ENCODE measurements at regions of chr4 and their contacts with region 1.

Region 1: DNA sequence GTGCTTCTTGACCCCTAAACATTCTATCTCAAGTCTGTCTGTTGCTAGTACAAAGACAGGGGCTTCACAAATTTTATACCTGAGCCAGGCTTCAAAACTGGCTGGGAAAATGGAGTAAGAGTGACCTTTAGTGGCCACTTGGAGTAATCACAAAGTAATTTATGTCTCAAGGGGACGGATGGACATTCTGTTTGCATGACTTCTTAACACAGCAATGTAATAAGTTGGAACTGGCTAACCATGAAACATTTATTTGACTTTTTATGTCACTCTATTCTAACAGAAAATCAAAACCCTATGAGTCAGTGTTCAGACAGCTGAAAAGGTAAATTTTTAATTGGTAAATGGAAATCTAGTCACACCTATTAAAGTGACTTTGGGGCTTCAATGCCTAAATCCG is 600.6 kb downstream of the ANKRD50 start:
- DNase-seq: peak in 2 of 4 donors; percentile 57 to 78
- ATAC-seq: peak; percentile 89
- H3K4me3 ChIP-seq: no peak overlapping the region
- H3K27ac ChIP-seq: peak overlapping the region in 1 of 2 donors; percentile 20
- H3K4me1 ChIP-seq: peaks cover 0 to 4% of the 10 kb centered on the region in 2 donors
- H3K27me3 ChIP-seq: no peaks in the 10 kb centered on the region
- CTCF ChIP-seq: peak; percentile 26 to 54

Region 2: GRCh38 chr4:123127218-123127617 is 984.7 kb before region 1 on chr4:
- intact Hi-C with region 1: loop called in 1 of 2 experiments (anchors 10 kb)
- DNase-seq: peak in 1 of 4 donors; percentile 44
- ATAC-seq: peak; percentile 59
- H3K4me3 ChIP-seq: no peak overlapping the region
- H3K27ac ChIP-seq: no peak overlapping the region
- H3K4me1 ChIP-seq: peaks cover 0 to 6% of the 10 kb centered on the region in 2 donors
- H3K27me3 ChIP-seq: no peaks in the 10 kb centered on the region
- CTCF ChIP-seq: peak; percentile 14 to 27

Region 3: DNA sequence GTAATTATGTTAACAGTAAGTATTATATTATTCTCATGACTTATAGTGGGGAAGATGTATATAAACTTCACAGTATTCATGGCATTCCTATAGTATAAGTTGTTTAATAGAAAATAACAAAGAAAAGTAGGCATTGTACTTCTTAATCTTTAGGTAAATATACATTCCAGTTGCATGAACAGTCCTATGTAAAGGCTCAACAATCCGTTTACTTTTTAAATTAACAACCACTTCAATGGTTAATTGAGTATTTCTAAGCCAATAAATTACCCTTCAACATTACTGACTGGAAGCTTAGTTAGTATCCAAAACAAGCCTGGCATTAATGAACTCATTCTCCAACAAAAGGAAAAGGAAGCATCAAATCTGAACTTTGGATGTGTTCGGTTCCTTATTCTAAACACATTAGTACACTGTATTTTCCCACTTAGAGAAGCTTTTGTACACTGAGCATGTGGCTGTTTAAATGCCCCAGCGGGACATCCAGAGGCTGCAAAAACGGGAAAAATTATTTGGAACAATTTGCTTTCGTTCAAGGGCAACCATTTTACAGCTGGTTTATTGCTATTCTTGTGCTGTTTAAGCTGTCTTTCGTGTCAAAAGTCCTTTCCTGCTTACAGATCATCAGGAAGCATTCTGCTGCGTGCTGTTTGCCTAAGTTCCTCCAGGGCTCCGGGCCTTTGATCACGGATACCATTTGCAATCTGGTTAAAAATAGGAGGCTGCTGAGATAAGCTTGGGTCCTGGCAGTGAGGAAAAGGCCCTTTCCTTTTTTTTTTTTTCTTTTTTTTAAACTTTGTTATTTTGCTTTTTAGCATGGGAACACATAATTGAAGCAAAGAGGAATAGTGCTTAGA is 255.0 kb before region 1 on chr4:
- intact Hi-C with region 1: no loop called
- DNase-seq: peak in 1 of 4 donors; percentile 61
- ATAC-seq: peak; percentile 57
- H3K4me3 ChIP-seq: no peak overlapping the region
- H3K27ac ChIP-seq: peak overlapping the region; percentile 45 to 47
- H3K4me1 ChIP-seq: peaks cover 0 to 11% of the 10 kb centered on the region in 2 donors
- H3K27me3 ChIP-seq: no peaks in the 10 kb centered on the region
- CTCF ChIP-seq: no peak

Region 4: DNA sequence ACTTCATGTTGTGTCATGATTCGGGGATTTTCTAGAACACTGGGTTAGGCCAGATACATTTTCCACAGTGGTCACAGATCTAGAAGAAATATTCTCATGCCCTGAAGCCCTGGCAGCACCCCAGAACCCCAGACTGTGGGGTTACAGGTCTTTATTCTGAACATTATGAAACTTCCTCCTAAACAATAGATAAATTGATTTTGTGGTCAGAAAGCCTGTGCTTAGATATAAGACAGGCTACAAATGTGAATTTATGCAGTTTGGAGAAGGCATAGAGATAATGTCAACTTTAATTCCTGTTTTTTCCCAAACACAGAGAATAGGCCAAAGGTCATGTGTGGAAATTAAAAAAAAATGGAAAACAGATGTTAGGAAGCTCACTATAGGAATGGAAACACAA is 222.4 kb before region 1 on chr4:
- intact Hi-C with region 1: no loop called
- DNase-seq: no peak
- ATAC-seq: no peak
- H3K4me3 ChIP-seq: no peak overlapping the region
- H3K27ac ChIP-seq: no peak overlapping the region
- H3K4me1 ChIP-seq: peaks cover 7 to 12% of the 10 kb centered on the region in 2 donors
- H3K27me3 ChIP-seq: no peaks in the 10 kb centered on the region
- CTCF ChIP-seq: no peak

Measured in left lung (tissue), 14 donors.